Heart left ventricle (tissue), 16 donors: ENCODE measurements at regions of chr1 and their contacts with region 1.

Region 1: DNA sequence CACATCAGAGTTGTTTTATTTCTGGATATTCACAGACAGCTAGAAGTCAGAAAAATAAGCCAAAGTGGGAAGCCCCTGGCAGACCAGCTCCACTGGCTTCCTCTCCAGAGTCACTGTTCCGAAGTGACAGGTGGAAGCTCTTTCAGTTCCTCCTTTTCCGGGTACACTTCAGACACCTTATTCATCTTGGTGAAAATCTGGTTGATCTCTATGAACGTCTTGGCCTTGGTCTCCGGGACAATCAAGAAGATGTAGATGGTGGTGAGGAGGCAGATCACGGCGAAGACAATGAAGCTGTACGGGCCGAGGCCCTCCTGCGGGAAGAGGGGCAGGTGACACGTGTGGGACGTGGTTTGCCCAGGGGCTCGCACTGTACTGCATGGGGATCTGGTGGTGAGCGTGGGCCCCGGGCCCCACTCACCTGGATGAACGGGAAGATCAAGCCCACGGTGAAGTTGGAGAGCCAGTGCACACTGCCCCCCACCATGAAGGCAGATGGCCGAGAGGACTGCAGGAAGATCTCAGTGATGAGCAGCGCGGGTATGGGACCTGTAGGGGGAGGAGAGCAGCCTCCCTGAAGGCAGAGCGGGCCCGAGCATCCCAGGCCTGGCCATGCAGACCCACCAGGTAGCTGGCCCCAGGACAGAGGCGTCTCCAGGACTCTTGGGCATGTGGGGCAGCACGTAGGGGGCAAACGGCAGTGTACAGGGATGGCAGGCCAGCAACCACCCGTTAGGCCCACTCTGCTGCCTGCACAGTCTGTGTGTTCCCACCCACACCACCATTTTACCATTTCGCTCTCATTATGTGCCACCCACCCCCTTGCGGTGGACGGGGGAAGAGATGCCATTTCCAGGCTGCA is 11.5 kb upstream of the SLC2A7 start:
- DNase-seq: no peak
- ATAC-seq: no peak
- H3K4me3 ChIP-seq: no peak overlapping the region
- H3K27ac ChIP-seq: no peak overlapping the region
- H3K4me1 ChIP-seq: no peaks in the 10 kb centered on the region
- H3K27me3 ChIP-seq: peaks cover 0 to 9% (median 0%) of the 10 kb centered on the region in 9 donors
- CTCF ChIP-seq: no peak
- POLR2A ChIP-seq: no peak

Region 2: GRCh38 chr1:9084906-9085305 is 47.2 kb after region 1 on chr1:
- intact Hi-C with region 1: loop called in 2 of 10 experiments (anchors 10 kb)
- DNase-seq: peak; percentile 56 to 84 (median 76)
- ATAC-seq: peak; percentile 91 to 96 (median 94)
- H3K4me3 ChIP-seq: no peak overlapping the region
- H3K27ac ChIP-seq: peak overlapping the region in 7 of 12 donors; percentile 37 to 72 (median 55)
- H3K4me1 ChIP-seq: peaks cover 0 to 37% (median 12%) of the 10 kb centered on the region in 12 donors
- H3K27me3 ChIP-seq: no peaks in the 10 kb centered on the region
- CTCF ChIP-seq: no peak
- POLR2A ChIP-seq: no peak